Aorta (tissue), 5 donors: ENCODE measurements at regions of chr1 and their contacts with region 1.

Region 1: GRCh38 chr1:100162881-100163280 is 15.2 kb downstream of the LRRC39 start:
- DNase-seq: no peak
- ATAC-seq: no peak
- H3K4me3 ChIP-seq: no peak overlapping the region
- H3K27ac ChIP-seq: no peak overlapping the region
- H3K4me1 ChIP-seq: no peaks in the 10 kb centered on the region
- H3K27me3 ChIP-seq: no peaks in the 10 kb centered on the region

Region 2: DNA sequence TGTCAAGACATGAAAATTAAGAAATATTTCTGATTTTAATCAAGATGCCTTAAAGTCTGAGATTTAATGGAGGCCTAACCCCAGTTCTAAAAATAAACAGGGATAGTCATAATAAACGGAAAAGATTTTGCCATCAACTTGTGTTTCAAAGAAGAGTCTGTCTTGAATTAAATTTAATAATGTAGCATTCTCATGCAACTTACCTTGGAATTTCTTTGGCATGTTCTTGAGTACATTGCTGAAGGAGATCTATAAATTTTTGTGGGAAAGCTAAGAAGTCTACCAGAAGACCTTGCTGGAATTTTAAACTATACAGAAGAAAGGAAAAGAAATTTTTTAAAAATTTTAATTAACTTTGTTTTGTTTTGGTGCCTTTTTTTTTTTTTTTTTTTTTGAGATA is 40.7 kb before region 1 on chr1:
- intact Hi-C with region 1: no loop called
- DNase-seq: no peak
- ATAC-seq: no peak
- H3K4me3 ChIP-seq: no peak overlapping the region
- H3K27ac ChIP-seq: no peak overlapping the region
- H3K4me1 ChIP-seq: no peaks in the 10 kb centered on the region
- H3K27me3 ChIP-seq: no peaks in the 10 kb centered on the region

Region 3: DNA sequence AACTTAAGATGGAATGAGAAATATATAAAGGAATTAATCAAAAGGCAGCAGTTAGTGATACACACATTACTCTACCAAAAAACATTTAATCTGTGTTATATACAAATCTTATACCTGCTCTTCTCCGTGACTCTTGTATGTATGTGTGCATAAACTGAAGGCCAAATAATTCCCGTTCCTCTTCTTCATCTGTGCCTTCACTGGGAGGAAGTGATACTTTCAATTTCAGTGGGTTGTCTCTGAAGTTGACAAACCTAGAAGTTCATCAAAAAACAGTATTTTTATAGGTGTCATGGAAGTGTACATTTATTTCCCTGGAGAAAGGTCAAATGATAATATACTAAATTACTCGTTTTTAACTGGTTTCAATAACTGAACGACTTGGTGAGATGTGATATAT is 10.6 kb before region 1 on chr1:
- intact Hi-C with region 1: loop called in 1 of 2 experiments (anchors 1 kb)
- DNase-seq: no peak
- ATAC-seq: no peak
- H3K4me3 ChIP-seq: no peak overlapping the region
- H3K27ac ChIP-seq: no peak overlapping the region
- H3K4me1 ChIP-seq: no peaks in the 10 kb centered on the region
- H3K27me3 ChIP-seq: no peaks in the 10 kb centered on the region